ENCODE measurements at regions of chr5 and their contacts with region 1.

Region 1: GRCh38 chr5:90932052-90932699 is 373.6 kb downstream of the ADGRV1 start:
- DNase-seq: no peak
- ATAC-seq: peak; percentile 75 to 91
- H3K4me3 ChIP-seq: no peak overlapping the region
- H3K27ac ChIP-seq: no peak overlapping the region
- H3K4me1 ChIP-seq: peaks cover 7% of the 10 kb centered on the region
- H3K27me3 ChIP-seq: no peaks in the 10 kb centered on the region
- CTCF ChIP-seq: peak; percentile 75

Region 2: GRCh38 chr5:91038180-91038808 is 106.1 kb after region 1 on chr5:
- intact Hi-C with region 1: no loop called
- DNase-seq: no peak
- ATAC-seq: no peak
- H3K4me3 ChIP-seq: no peak overlapping the region
- H3K27ac ChIP-seq: no peak overlapping the region
- H3K4me1 ChIP-seq: no peaks in the 10 kb centered on the region
- H3K27me3 ChIP-seq: no peaks in the 10 kb centered on the region
- CTCF ChIP-seq: no peak

Region 3: DNA sequence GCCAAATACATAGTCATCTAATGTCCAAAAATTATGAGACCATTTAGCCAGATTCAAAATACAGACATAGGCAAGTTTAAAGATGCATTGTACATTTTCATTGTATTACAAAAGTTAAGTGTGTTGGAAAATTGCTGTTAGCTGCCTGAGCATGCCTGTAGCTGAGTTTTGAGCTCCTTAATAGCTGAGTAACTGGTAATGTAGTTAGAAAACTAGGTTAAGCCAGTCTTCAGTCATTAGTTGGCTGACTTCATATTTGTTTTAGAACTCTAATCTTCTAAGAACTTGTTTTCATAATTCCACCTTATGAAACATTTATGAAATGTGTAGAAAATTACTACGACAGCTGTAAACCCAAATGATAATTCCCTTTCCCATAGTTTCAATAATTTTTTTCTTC is 157.6 kb after region 1 on chr5:
- intact Hi-C with region 1: loop called (anchors 10 kb)
- DNase-seq: no peak
- ATAC-seq: peak in 1 of 2 donors; percentile 50
- H3K4me3 ChIP-seq: no peak overlapping the region
- H3K27ac ChIP-seq: no peak overlapping the region
- H3K4me1 ChIP-seq: no peaks in the 10 kb centered on the region
- H3K27me3 ChIP-seq: no peaks in the 10 kb centered on the region
- CTCF ChIP-seq: no peak

Region 4: GRCh38 chr5:91419571-91420537 is 487.7 kb after region 1 on chr5:
- intact Hi-C with region 1: loop called (anchors 5 kb)
- DNase-seq: peak; percentile 45
- ATAC-seq: peak in 1 of 2 donors; percentile 74
- H3K4me3 ChIP-seq: no peak overlapping the region
- H3K27ac ChIP-seq: no peak overlapping the region
- H3K4me1 ChIP-seq: peaks cover 5% of the 10 kb centered on the region
- H3K27me3 ChIP-seq: no peaks in the 10 kb centered on the region
- CTCF ChIP-seq: peak; percentile 74